AG04449 (cell line): ENCODE measurements at regions of chr17 and their contacts with region 1.

Region 1: GRCh38 chr17:4908301-4908700 is 5.4 kb upstream of the CHRNE start:
- DNase-seq: no peak
- H3K4me3 ChIP-seq: no peak overlapping the region
- CTCF ChIP-seq: no peak

Region 2: GRCh38 chr17:4806777-4807604 is 101.3 kb before region 1 on chr17 and contains the start of gene PLD2:
- CTCF ChIA-PET with region 1: no interaction called
- POLR2A ChIA-PET with region 1: no interaction called
- DNase-seq: no peak
- H3K4me3 ChIP-seq: peak within 1 kb of the TSS; percentile 72
- CTCF ChIP-seq: no peak

Region 3: DNA sequence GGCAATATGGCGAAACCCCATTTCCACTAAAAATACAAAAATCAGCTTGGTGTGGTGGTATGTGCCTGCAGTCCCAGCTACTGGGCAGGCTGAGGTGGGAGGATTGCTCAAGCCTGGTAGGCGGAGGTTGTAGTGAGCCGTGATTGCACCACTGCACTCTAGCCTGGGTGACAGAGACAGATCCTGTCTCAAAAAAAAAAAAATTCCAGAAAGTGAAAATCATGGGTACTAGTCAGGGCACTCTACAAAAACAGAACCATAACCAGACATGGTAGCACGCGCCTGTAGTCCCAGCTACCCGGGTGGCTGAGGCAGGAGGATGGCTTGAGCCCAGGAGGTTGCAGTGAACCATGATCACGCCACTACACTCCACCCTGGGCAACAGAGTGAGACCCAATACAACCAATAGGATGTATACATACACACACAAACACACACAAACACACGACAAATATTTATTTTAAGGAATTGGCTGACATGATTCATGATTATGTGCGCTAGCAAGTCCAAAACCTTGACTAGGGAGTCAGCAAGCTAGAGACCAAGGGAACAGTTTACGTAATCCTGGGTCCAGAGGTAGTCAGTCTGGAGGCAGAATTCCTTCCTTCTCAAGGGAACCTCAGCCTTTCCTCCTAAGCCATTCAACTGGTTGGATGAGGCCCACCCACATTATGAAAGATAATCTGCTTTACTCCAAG is 12.2 kb after region 1 on chr17:
- CTCF ChIA-PET with region 1: interaction called, 21 read pairs
- POLR2A ChIA-PET with region 1: interaction called, 3 read pairs
- DNase-seq: no peak
- H3K4me3 ChIP-seq: no peak overlapping the region
- CTCF ChIP-seq: no peak

Region 4: DNA sequence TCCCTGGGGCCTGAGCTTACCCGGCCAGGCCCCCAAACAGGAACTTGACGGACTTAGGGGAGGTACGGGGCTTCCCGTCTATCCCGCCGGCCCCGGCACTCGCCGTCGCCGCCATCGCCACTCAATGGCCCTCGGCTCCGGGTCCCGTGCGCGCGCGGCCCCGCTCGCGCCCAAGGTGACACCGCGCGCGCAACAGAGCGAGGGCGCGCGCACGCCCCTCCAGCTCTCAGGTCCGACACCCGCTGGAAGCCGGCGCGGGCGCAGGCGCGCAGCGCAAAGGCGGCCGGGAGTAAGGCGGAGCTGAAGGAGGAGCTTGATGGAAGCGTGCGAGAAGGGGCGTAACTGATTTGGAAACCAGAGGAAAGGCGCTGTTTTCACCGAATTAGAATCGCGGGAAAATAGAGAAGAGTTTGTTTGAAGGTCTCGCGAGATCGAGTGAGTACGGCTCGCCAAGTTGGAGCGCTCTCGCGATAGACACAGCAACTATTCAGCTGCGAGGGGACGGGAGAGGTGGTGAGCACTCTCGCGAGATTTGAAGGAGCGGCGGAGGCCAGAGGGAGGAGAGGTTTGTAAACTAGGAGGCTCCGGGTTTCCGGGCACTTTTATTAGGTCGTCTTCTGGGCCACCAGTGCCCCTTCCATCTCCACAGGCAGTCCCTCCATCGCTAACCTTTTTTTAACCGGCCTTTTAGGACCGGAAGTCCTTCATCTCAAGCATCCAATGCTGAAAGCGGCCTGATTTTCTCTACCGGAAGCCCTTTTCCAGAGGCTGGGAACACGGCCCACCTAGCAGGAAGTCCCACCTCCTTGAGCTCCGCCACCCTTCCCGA is 31.7 kb after region 1 on chr17 and contains the starts of genes RNF167 and SLC25A11:
- CTCF ChIA-PET with region 1: interaction called, 11 read pairs
- POLR2A ChIA-PET with region 1: interaction called, 8 read pairs
- DNase-seq: peak; percentile 98
- H3K4me3 ChIP-seq: peak within 1 kb of the TSS; percentile 92
- CTCF ChIP-seq: no peak

Region 5: GRCh38 chr17:5065227-5065744 is 157.0 kb after region 1 on chr17:
- CTCF ChIA-PET with region 1: interaction called, 93 read pairs
- POLR2A ChIA-PET with region 1: interaction called, 6 read pairs
- DNase-seq: no peak
- H3K4me3 ChIP-seq: no peak overlapping the region
- CTCF ChIP-seq: no peak